Sigmoid colon (tissue), 7 donors: ENCODE measurements at regions of chr20 and their contacts with region 1.

Region 1: GRCh38 chr20:23350196-23350903 is at the start of gene NXT1:
- DNase-seq: peak; percentile 99
- H3K4me3 ChIP-seq: peak within 1 kb of the TSS; percentile 67 to 98 (median 82)
- H3K27ac ChIP-seq: peak within 1 kb of the TSS; percentile 91 to 100 (median 99)
- H3K4me1 ChIP-seq: peaks cover 0 to 32% (median 22%) of the 10 kb centered on the region in 4 donors
- H3K27me3 ChIP-seq: no peaks in the 10 kb centered on the region
- CTCF ChIP-seq: no peak
- EP300 ChIP-seq: peak in 1 of 4 donors; percentile 9
- POLR2A ChIP-seq: peak; percentile 61 to 80
- total RNA-seq, gene NXT1: 19.9 to 57.6 (median 29.3) TPM

Region 2: GRCh38 chr20:21901470-21902275 is 1448.7 kb before region 1 on chr20:
- intact Hi-C with region 1: loop called (anchors 10 kb)
- DNase-seq: peak; percentile 96
- H3K4me3 ChIP-seq: no peak overlapping the region
- H3K27ac ChIP-seq: peak overlapping the region in 3 of 4 donors; percentile 57 to 79 (median 72)
- H3K4me1 ChIP-seq: peaks cover 0 to 42% (median 19%) of the 10 kb centered on the region in 4 donors
- H3K27me3 ChIP-seq: no peaks in the 10 kb centered on the region
- CTCF ChIP-seq: no peak
- EP300 ChIP-seq: peak; percentile 51 to 81 (median 70)
- POLR2A ChIP-seq: no peak

Region 3: DNA sequence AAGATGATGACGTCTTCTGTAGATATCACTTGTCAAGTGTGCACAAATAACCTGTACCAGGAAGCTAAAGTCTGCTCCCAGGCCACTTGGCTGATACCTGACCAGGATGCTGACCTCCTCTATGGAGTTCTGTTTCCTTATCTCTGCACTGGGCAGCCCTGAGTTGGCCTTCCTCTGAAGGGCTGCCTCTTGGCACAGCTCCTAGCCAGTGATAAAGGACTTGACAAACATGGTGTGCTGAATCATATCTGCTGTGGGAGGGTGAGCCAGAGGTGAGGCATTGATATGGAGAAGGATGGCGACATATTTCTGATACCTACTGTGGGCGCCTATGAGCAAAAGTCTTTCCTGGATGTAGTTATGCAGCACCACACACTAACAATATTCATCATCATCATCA is 733.2 kb before region 1 on chr20:
- intact Hi-C with region 1: no loop called
- DNase-seq: no peak
- H3K4me3 ChIP-seq: no peak overlapping the region
- H3K27ac ChIP-seq: no peak overlapping the region
- H3K4me1 ChIP-seq: no peaks in the 10 kb centered on the region
- H3K27me3 ChIP-seq: peaks cover 0 to 15% (median 0%) of the 10 kb centered on the region in 3 donors
- CTCF ChIP-seq: no peak
- EP300 ChIP-seq: no peak
- POLR2A ChIP-seq: no peak

Region 4: DNA sequence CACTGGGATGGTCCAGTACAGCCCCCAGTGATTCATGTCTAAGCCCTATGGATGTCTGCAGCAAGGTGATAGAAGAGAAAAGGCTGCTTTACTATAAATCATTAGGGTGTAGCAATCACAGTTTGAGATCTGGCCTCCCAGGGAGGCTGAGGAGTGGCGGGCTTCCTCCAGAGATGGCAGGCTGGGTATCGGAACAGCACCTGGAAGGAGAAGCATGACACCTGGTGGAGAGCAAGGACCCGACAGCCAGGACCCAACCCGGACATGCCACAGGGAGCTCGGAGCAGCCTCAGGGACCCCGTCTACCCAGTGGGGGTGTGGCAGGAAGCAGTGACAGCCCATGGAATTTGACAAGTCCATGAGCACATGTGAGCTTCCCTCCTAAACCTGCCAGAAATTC is 149.4 kb before region 1 on chr20:
- intact Hi-C with region 1: loop called (anchors 10 kb)
- DNase-seq: no peak
- H3K4me3 ChIP-seq: no peak overlapping the region
- H3K27ac ChIP-seq: no peak overlapping the region
- H3K4me1 ChIP-seq: peaks cover 0 to 34% (median 30%) of the 10 kb centered on the region in 4 donors
- H3K27me3 ChIP-seq: no peaks in the 10 kb centered on the region
- CTCF ChIP-seq: no peak
- EP300 ChIP-seq: no peak
- POLR2A ChIP-seq: no peak

Region 5: DNA sequence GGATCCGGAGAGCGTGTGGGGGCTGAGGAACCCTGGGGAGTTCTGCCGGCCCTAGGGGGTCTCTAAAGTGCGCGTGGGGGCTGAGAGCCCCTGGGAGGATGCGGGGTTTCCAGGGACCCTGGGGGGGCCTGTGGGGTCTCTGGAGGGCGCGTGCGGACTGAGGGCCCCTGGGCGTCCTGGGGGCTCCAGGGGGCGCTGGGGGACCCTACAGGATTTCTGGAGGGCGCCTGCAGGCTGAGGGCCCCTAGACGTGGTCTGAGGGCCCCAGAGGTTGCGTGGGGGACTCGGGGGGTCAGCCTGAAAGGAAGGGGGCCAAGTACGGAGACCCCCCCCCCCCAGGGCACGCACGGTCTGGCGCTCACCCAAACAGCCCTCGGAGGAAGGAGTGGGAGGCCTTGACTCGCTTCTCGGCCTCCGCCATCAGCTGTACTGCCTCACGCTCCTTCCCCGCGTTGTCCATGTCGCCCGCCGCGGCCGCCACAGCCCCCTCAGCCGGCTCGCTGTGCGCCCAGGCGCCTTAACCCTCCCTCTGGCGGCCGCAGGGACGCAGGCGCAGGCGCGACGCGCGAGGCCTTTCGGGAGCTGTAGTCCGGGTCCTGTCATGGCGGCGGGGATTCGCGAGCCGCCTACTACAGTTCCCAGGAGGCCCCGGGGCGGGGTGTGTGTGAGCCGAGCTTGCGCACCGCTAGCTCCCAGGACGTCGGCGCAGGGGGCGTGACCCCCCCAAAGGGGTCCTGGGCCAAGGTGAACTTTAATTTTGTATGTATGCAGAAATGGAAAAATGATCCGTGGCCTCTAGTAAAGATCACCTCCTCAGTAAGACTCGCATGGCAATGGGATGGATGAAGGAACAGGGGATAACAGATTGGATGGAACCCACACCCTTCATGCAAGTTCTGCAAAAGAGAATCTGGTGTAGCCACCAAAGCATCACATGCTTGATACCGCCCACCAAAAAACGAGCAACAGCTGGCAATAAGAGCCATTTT is 70.9 kb after region 1 on chr20 and contains the start of gene NAPB:
- intact Hi-C with region 1: loop called (anchors 1 kb)
- DNase-seq: peak; percentile 96
- H3K4me3 ChIP-seq: peak within 1 kb of the TSS; percentile 95 to 98 (median 97)
- H3K27ac ChIP-seq: peak within 1 kb of the TSS; percentile 92 to 94 (median 92)
- H3K4me1 ChIP-seq: peaks cover 0 to 37% (median 24%) of the 10 kb centered on the region in 4 donors
- H3K27me3 ChIP-seq: no peaks in the 10 kb centered on the region
- CTCF ChIP-seq: peak; percentile 53 to 69 (median 58)
- EP300 ChIP-seq: no peak
- POLR2A ChIP-seq: peak; percentile 63 to 81
- total RNA-seq, gene NAPB: 14.4 to 22.9 (median 20.9) TPM

Region 6: GRCh38 chr20:23606652-23607049 is 256.3 kb after region 1 on chr20:
- intact Hi-C with region 1: loop called (anchors 2 kb)
- DNase-seq: peak; percentile 89
- H3K4me3 ChIP-seq: no peak overlapping the region
- H3K27ac ChIP-seq: peak overlapping the region in 1 of 4 donors; percentile 11
- H3K4me1 ChIP-seq: peaks cover 0 to 14% (median 3%) of the 10 kb centered on the region in 4 donors
- H3K27me3 ChIP-seq: no peaks in the 10 kb centered on the region
- CTCF ChIP-seq: peak; percentile 65 to 95 (median 84)
- EP300 ChIP-seq: no peak
- POLR2A ChIP-seq: no peak

Region 7: DNA sequence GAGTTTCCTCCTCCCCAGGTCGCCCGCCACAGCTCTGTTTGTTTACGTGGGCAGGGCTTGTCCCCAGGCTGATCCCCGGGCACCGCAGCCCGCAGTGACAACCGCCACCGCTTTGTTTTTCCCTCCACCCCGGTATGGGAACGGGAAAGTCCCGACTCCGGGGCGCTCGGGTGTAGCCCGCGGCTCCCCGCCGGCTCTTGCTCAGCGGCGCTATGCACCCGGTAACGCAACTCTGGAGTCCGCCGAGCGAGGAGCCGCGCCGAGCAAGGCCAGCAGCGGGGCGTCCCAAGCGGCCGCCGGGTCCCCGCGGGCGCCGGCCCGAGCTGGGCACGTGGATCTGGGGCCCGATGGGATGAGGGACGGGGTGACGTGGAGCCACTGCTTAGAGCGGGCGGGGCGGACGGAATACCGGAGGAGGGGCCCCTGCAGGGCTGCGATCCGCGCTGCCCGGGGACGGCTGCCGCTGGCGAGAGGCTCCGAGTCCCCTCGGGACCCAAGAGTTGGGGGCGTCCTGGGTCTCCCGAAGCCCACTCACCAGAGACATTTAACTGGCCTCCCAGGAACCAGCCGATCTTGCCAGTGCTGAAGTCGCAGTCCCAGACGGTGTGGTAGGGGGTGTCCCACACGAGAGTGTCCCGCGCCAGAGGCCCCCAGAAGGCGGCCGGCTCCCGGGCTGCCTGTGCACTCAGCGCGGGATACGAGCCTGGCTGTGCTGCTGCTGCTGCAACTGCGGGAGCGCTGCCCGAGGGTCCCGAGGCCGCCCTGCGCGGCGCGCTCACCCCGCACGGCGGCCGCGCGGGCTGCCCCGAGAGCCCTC is 1707.1 kb after region 1 on chr20:
- intact Hi-C with region 1: loop called (anchors 10 kb)
- DNase-seq: peak; percentile 90
- H3K4me3 ChIP-seq: peak overlapping the region; percentile 75 to 88 (median 80)
- H3K27ac ChIP-seq: peak overlapping the region; percentile 93 to 97 (median 94)
- H3K4me1 ChIP-seq: peaks cover 2 to 62% (median 58%) of the 10 kb centered on the region in 4 donors
- H3K27me3 ChIP-seq: no peaks in the 10 kb centered on the region
- CTCF ChIP-seq: no peak
- EP300 ChIP-seq: no peak
- POLR2A ChIP-seq: peak; percentile 36 to 47